Activated B cell treated with CpG ODN at 0.5 μM for 24 hours (primary cell): ENCODE measurements at regions of chr10 and their contacts with region 1.

Region 1: DNA sequence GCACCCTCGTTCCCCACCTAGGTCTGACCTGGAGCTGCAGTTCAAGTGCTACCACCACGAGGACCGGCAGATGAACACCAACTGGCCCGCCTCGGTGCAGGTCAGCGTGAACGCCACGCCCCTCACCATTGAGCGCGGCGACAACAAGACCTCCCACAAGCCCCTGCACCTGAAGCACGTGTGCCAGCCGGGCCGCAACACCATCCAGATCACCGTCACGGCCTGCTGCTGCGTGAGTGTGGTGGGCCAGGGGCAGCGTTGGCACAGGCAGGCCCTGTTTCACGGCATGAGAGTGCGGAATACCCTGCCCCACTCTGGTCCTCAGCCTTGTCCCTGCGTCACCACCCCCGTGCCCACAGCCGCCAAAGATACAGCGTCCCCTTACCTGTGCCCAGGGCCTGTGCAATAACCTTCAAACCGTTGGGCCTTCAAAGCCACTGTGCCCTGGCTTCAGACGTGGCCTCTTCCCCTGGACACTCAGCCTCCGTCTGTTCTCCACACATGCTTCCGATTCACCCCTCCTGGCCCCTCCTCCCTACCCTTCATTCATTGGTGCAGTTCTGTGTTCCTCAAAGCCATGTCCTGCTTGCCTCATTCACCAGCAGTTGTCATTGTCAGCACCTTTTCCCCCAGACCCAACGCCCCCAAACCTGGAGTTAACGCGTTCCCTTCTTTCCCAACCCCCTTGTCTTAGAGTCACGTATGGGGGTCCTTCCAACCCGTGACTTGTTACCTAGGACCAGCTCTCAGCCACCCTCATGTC is 46.4 kb upstream of the PPIF start:
- DNase-seq: no peak
- ATAC-seq: no peak
- H3K4me3 Mint-ChIP-seq: no peak overlapping the region
- H3K27ac Mint-ChIP-seq: no peak overlapping the region
- H3K4me1 Mint-ChIP-seq: peaks cover 13% of the 10 kb centered on the region
- H3K27me3 Mint-ChIP-seq: no peaks in the 10 kb centered on the region
- CTCF ChIP-seq: no peak

Region 2: GRCh38 chr10:79202188-79203013 is 98.5 kb before region 1 on chr10:
- CTCF ChIA-PET with region 1: no interaction called
- POLR2A ChIA-PET with region 1: interaction called, 10 read pairs
- intact Hi-C with region 1: no loop called
- DNase-seq: peak; percentile 39
- ATAC-seq: peak; percentile 76
- H3K4me3 Mint-ChIP-seq: no peak overlapping the region
- H3K27ac Mint-ChIP-seq: no peak overlapping the region
- H3K4me1 Mint-ChIP-seq: no peaks in the 10 kb centered on the region
- H3K27me3 Mint-ChIP-seq: no peaks in the 10 kb centered on the region
- CTCF ChIP-seq: no peak